Activated T-helper 2 cell treated with anti-CD3 and anti-CD28 coated beads, Interferon-gamma antibody, Interleukin-2, Interleukin-4, amounts not matched to agents 10 μg/mL and 5 μg/mL and 100 μg/mL, durations not matched to agents 14 hours and 24 hours and 36 hours (primary cell): ENCODE measurements at regions of chr20 and their contacts with region 1.

Region 1: DNA sequence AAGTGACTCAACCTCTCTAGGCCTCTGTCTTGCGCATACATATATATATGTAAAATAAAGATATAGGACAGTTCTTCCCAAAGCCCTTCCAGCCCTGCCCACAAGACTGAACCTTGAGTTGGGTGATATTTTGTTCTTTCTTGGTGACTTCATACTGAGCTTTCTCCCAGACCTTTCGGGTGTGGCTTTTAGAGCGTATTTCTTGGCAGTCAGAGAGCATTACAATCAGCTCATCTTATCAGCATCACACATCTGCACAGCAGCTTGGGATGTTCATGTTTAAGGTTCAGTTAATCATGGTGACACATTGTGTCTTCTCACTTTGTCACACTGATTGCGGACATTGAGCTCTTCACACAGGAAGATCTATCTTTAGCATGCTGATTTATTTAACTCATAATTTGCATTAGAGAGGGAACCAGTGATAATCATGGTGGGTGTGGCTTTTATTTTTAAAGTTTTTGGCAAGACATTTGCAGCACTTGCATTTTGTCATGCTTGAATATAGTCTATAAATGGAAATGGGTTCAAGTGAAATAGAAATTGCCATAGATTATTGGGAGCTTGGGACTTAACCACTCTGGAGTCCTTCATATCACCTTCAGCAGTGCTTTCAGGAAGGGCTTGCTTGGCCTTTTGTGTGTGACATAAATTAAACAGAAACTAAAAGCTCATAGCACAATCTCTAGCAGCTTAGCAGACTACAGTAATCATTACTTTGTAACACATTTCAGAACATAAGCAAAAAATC is 8.3 kb downstream of the KIF3B start:
- DNase-seq: peak; percentile 47
- H3K4me3 Mint-ChIP-seq: peak overlapping the region; percentile 60
- H3K27ac Mint-ChIP-seq: peak overlapping the region; percentile 84
- H3K4me1 Mint-ChIP-seq: peaks cover 60% of the 10 kb centered on the region
- H3K27me3 Mint-ChIP-seq: no peaks in the 10 kb centered on the region

Region 2: DNA sequence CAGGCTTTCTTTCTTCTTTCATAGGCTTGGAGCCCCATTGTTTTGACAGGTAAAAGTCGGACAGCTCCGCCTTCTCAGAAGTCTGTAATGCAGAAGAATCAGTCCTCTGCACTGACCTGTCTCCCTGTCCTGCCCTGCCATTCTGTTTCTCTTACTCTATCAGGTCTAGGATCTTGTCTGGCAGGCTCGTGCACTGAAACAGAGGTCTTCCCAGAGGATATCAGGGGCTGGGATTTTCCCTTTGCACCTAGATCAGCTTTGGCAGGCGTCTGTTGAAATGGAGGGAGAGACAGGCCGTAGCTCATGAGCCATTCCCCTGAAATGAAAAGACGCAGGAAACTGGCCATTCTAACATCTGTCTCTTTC is 16.7 kb after region 1 on chr20:
- intact Hi-C with region 1: loop called (anchors 2 kb)
- DNase-seq: no peak
- H3K4me3 Mint-ChIP-seq: no peak overlapping the region
- H3K27ac Mint-ChIP-seq: peak overlapping the region; percentile 76
- H3K4me1 Mint-ChIP-seq: peaks cover 37% of the 10 kb centered on the region
- H3K27me3 Mint-ChIP-seq: no peaks in the 10 kb centered on the region